ENCODE measurements at regions of chr1 and their contacts with region 1.

Region 1: DNA sequence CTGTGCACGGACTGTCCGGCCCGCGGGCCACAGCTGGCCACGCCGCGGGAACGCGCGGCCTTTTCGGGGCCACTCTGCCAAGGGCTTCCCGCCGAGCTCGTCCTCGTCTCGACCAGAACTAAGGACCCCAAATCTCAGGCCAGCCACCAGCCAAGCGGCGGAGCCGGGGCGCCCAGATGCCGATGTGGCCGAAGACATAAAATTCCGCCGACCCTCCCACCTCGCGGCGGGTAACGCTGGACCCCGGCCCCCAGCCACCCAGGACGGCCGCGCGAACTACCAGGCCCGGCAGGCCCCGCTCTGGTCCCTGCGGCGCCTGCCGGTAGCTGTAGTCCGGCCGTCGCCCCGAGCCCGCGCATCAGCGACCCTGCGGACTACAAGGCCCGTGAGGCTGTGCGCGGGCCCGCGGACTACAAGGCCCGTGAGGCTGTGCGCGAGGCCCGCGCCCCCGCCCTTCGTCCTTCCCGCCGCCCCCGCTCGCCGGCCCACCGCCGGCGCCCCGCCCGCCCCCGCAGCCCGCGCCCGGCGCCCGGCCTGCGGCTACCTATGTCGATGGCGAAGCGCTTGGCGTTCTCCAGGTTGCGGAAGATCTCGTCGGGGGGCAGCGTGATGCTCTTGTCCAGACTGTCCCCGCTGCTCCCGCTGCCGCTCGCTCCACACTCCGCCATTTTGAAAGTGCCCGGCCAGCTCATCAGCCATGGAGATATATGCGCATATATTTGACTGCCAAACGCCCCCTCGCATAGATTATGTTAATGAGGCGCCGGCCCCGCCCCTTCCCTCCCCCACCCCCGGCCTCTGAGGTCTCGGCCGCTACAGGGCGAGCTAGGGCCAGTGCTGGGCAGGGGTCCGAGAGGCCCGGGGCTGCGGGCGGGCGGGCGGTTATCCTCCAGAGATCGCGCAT is at the start of gene PANK4:
- DNase-seq: peak; percentile 75 to 94 (median 85)
- ATAC-seq: peak; percentile 85 to 91 (median 88)
- H3K4me3 ChIP-seq: peak within 1 kb of the TSS; percentile 75 to 92
- H3K4me3 Mint-ChIP-seq: peak within 1 kb of the TSS; percentile 85 to 93 (median 85)
- H3K27ac ChIP-seq: peak within 1 kb of the TSS; percentile 64
- H3K27ac Mint-ChIP-seq: peak within 1 kb of the TSS; percentile 95 to 97
- H3K4me1 ChIP-seq: peaks cover 24 to 77% of the 10 kb centered on the region in 2 experiments
- H3K4me1 Mint-ChIP-seq: peaks cover 43 to 53% (median 51%) of the 10 kb centered on the region in 3 donors
- H3K27me3 ChIP-seq: peaks cover 0 to 39% of the 10 kb centered on the region in 2 experiments
- H3K27me3 Mint-ChIP-seq: peaks cover 0 to 16% of the 10 kb centered on the region in 2 donors
- total RNA-seq, gene PANK4: 51.0 to 128 (median 119) TPM

Region 2: DNA sequence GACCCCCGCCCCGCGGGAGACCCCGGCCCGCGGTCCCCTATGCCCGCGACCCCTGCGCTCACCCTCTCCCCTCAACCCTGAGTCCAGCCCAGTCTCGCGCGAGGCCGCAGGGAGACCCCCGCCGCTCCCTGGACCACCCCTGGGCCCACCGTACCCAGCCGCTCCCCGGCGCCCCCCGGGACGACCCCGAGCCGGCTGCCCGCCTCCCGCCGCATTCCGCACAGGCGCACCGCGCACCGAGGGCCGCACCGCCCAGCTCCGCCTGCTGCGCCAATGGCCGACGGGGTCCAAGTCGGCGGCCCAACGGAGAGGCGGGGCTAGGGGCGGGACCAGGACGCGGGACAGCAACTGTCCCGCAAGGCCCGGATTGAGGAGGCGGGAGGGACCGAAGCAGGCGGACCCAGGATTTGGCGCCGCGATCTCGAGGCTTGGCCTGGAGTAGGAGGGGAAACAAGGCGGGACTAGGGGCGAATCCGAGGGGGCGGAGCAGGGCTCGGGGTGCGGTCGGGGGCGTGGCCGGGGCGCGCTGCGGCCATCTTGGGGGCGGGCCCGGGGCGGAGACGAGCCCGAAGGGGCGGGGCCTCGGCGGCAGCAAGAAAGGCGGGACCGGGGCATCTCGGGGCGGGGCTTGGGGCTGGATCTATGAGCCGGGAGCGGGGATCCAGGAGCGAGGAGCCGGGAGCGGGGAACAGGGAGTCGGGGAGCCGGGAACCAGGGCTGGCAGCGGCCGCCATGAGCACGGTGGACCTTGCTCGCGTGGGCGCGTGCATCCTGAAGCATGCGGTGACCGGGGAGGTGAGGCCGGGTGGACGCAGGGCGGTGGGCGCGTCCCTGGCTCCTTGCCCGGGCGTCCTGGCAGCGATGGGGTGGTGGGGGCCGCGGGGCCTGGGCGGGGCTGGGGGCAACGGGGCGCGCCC is 60.2 kb after region 1 on chr1 and contains the start of gene PRXL2B:
- CTCF ChIA-PET with region 1: interaction called, 3 to 11 read pairs
- POLR2A ChIA-PET with region 1: no interaction called
- DNase-seq: peak; percentile 86 to 98 (median 93)
- ATAC-seq: peak; percentile 74 to 79 (median 76)
- H3K4me3 ChIP-seq: peak within 1 kb of the TSS; percentile 61 to 82
- H3K4me3 Mint-ChIP-seq: peak within 1 kb of the TSS; percentile 83 to 89 (median 88)
- H3K27ac ChIP-seq: peak within 1 kb of the TSS; percentile 96
- H3K27ac Mint-ChIP-seq: peak within 1 kb of the TSS; percentile 96 to 97
- H3K4me1 ChIP-seq: peaks cover 21 to 61% of the 10 kb centered on the region in 2 experiments
- H3K4me1 Mint-ChIP-seq: peaks cover 37 to 42% (median 39%) of the 10 kb centered on the region in 3 donors
- H3K27me3 ChIP-seq: peaks cover 0 to 2% of the 10 kb centered on the region in 2 experiments
- H3K27me3 Mint-ChIP-seq: no peaks in the 10 kb centered on the region
- total RNA-seq, gene PRXL2B: 17.3 to 37.6 (median 35.3) TPM

Region 3: DNA sequence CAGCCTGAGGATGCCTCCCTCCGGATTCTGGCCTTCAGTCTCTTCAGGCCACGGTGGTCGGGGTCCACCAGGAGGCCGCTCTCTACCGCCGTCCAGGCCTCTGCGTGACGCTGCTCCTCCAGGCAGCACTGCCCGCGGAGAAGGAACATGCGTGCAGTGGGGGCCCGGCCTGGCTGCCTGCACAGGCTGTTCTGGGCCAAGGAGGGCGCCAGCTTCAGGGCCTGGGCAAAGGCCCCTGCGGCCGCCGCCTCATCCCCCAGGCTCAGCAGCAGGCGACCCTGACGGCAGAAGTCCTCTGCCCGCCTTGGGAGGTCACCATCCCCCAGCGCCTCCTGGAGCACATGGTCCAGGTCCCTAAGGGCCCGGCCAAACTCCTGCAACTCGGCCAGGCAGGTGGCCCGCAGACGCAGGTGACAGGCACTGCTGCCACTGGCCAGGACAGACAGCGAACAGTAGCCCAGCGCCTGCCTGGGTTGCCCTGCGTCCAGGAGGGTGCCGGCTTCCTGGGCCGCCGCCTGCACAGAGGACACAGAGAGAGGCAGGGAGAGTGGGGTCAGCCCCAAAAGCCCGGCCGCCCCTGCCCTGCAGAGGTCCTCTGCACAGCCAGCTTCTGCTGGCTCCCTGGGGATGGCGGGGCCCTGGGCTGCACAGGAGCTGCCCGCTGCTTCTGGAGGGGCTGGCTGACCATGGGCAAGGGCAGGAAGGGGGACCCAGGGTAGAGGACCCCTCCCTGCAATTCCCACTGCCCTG is 115.4 kb after region 1 on chr1:
- CTCF ChIA-PET with region 1: no interaction called
- POLR2A ChIA-PET with region 1: no interaction called
- DNase-seq: peak in 1 of 35 experiments; percentile 13
- ATAC-seq: no peak
- H3K4me3 ChIP-seq: peak overlapping the region; percentile 68 to 70
- H3K4me3 Mint-ChIP-seq: peak overlapping the region; percentile 28 to 88 (median 28)
- H3K27ac ChIP-seq: peak overlapping the region; percentile 86
- H3K27ac Mint-ChIP-seq: peak overlapping the region in 1 of 2 donors; percentile 85
- H3K4me1 ChIP-seq: peaks cover 2 to 25% of the 10 kb centered on the region in 2 experiments
- H3K4me1 Mint-ChIP-seq: peaks cover 14 to 20% (median 16%) of the 10 kb centered on the region in 3 donors
- H3K27me3 ChIP-seq: peaks cover 0 to 19% of the 10 kb centered on the region in 2 experiments
- H3K27me3 Mint-ChIP-seq: no peaks in the 10 kb centered on the region

Region 4: GRCh38 chr1:3442331-3442730 is 916.2 kb after region 1 on chr1:
- CTCF ChIA-PET with region 1: interaction called in 1 of 2 experiments, 10 read pairs
- POLR2A ChIA-PET with region 1: no interaction called
- DNase-seq: no peak
- ATAC-seq: no peak
- H3K4me3 ChIP-seq: no peak overlapping the region
- H3K4me3 Mint-ChIP-seq: no peak overlapping the region
- H3K27ac ChIP-seq: no peak overlapping the region
- H3K27ac Mint-ChIP-seq: no peak overlapping the region
- H3K4me1 ChIP-seq: no peaks in the 10 kb centered on the region
- H3K4me1 Mint-ChIP-seq: no peaks in the 10 kb centered on the region
- H3K27me3 ChIP-seq: peaks cover 0 to 35% of the 10 kb centered on the region in 2 experiments
- H3K27me3 Mint-ChIP-seq: peaks cover 0 to 10% of the 10 kb centered on the region in 2 donors

Measured in T-cell (primary cell).